CD8-positive, alpha-beta T cell (primary cell): ENCODE measurements at regions of chr5 and their contacts with region 1.

Region 1: DNA sequence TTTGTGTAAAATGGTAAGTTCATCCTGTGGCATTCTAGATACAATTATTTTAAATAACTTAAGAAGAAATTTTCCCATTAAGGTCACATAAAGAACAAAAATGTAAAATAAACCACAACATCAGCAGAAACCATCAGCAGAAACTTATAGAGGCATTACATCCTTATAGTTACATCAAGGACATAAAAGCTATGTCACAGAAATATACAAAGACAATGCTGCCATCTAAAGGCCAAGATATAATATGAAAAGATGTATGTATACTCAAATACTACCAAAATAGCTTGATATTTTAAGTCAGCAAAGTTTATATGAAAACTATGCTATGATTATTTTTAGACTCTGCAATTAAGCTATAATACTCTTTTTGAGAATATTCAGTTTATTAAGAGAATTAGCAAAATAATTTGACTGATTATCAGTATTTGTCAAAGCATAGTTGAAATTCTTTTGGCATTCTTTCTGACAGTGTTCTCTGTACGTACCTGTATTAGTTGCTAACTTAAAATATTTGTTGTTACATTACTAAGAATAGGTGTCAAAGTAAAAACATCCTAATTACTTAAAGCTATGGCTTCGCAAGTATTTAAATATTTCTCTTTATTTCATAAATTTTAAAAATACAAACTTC is 36.2 kb downstream of the FBXL17 start:
- DNase-seq: peak in 2 of 9 experiments; percentile 47 to 66
- ATAC-seq: peak; percentile 65
- H3K4me3 ChIP-seq: no peak overlapping the region
- H3K4me3 Mint-ChIP-seq: no peak overlapping the region
- H3K27ac ChIP-seq: no peak overlapping the region
- H3K27ac Mint-ChIP-seq: no peak overlapping the region
- H3K4me1 ChIP-seq: no peaks in the 10 kb centered on the region
- H3K4me1 Mint-ChIP-seq: no peaks in the 10 kb centered on the region
- H3K27me3 ChIP-seq: no peaks in the 10 kb centered on the region
- H3K27me3 Mint-ChIP-seq: no peaks in the 10 kb centered on the region
- CTCF ChIP-seq: peak; percentile 72

Region 2: GRCh38 chr5:106875591-106876297 is 1469.9 kb before region 1 on chr5:
- CTCF ChIA-PET with region 1: no interaction called
- POLR2A ChIA-PET with region 1: no interaction called
- intact Hi-C with region 1: no loop called
- DNase-seq: peak in 2 of 9 experiments; percentile 8 to 18
- ATAC-seq: no peak
- H3K4me3 ChIP-seq: no peak overlapping the region
- H3K4me3 Mint-ChIP-seq: no peak overlapping the region
- H3K27ac ChIP-seq: no peak overlapping the region
- H3K27ac Mint-ChIP-seq: no peak overlapping the region
- H3K4me1 ChIP-seq: no peaks in the 10 kb centered on the region
- H3K4me1 Mint-ChIP-seq: no peaks in the 10 kb centered on the region
- H3K27me3 ChIP-seq: no peaks in the 10 kb centered on the region
- H3K27me3 Mint-ChIP-seq: no peaks in the 10 kb centered on the region
- CTCF ChIP-seq: no peak

Region 3: DNA sequence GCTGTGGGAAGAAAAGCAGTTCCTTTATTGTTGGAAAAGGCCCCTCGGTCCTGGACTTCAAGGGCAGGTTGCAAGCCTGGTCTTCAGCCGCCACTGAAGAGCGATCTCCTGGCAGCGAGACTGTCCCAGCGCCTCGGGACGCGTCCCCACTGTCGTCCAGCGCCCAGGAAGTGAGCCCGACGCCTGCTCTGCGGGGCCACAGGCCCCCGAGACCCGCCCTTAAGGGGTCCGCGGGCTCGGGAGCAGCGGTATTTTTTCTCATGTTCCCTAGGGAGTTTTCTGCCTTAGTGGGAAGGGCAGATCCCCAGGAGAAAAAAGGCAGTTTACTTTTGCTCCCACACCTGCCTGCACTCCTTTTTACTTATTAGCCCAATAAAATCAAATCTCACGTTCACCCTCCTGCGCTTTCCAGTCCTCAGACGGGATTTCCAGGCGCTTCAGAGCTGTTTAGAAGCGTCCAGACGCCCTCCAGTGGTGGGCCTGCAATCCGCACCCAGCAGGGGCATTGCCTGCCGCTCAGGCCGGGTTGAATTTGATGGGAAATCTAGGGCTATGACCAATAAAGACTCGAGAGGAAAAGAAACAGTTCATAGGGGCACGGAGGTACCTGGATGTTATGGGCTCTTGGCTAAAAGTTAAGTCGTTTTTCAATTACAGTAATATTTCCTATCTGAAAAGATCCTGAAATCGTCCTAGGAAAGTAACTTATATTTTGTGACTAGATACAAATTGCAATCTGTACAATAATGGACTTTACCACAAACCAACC is 672.1 kb before region 1 on chr5:
- CTCF ChIA-PET with region 1: no interaction called
- POLR2A ChIA-PET with region 1: no interaction called
- intact Hi-C with region 1: loop called in 1 of 2 experiments (anchors 10 kb)
- DNase-seq: peak; percentile 40 to 80 (median 66)
- ATAC-seq: peak; percentile 76
- H3K4me3 ChIP-seq: peak overlapping the region; percentile 43 to 44
- H3K4me3 Mint-ChIP-seq: peak overlapping the region; percentile 87
- H3K27ac ChIP-seq: no peak overlapping the region
- H3K27ac Mint-ChIP-seq: no peak overlapping the region
- H3K4me1 ChIP-seq: peaks cover 28% of the 10 kb centered on the region
- H3K4me1 Mint-ChIP-seq: peaks cover 32% of the 10 kb centered on the region
- H3K27me3 ChIP-seq: peaks cover 21 to 22% of the 10 kb centered on the region in 2 experiments
- H3K27me3 Mint-ChIP-seq: peaks cover 63% of the 10 kb centered on the region
- CTCF ChIP-seq: peak; percentile 81

Region 4: GRCh38 chr5:108148715-108149139 is 196.9 kb before region 1 on chr5:
- CTCF ChIA-PET with region 1: no interaction called
- POLR2A ChIA-PET with region 1: no interaction called
- intact Hi-C with region 1: loop called in 1 of 2 experiments (anchors 5 kb)
- DNase-seq: no peak
- ATAC-seq: no peak
- H3K4me3 ChIP-seq: no peak overlapping the region
- H3K4me3 Mint-ChIP-seq: no peak overlapping the region
- H3K27ac ChIP-seq: no peak overlapping the region
- H3K27ac Mint-ChIP-seq: no peak overlapping the region
- H3K4me1 ChIP-seq: no peaks in the 10 kb centered on the region
- H3K4me1 Mint-ChIP-seq: peaks cover 3% of the 10 kb centered on the region
- H3K27me3 ChIP-seq: no peaks in the 10 kb centered on the region
- H3K27me3 Mint-ChIP-seq: no peaks in the 10 kb centered on the region
- CTCF ChIP-seq: no peak

Region 5: DNA sequence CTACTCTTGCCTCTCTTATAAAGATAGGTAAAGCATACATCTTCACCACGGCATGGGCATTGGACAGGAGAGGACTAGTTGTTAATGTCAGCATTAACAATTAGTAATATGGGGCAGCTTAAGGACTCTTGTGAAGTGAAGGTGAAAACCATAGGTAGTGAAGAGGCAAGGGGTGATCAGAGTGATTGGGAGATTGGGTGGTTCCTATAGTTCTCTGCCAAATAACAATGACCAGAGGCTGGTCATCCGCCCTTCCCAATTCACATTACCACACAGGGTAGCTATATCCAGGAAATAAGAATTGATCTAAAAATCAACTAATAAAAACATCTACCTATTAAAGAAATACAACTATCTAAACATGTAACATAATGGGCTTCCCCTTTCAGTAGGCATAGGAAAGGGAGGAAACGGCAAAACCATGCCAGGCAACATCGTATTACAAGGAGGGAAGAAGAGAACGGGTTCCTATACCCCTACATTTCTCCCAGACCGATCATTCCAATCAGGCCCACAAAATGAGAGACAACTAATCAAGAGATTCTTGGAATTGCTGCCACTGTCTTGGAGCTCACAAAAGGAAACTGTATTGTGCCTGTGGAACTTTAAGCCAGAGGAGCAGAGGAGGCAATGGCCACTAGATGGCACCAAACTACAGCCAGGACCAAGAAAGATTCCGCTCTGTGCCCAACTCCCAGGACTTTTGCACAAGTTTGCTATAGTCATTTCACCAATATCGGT is 85.4 kb before region 1 on chr5:
- CTCF ChIA-PET with region 1: interaction called, 30 read pairs
- POLR2A ChIA-PET with region 1: no interaction called
- intact Hi-C with region 1: loop called (anchors 1 kb)
- DNase-seq: peak; percentile 26 to 79 (median 62)
- ATAC-seq: peak; percentile 62
- H3K4me3 ChIP-seq: no peak overlapping the region
- H3K4me3 Mint-ChIP-seq: no peak overlapping the region
- H3K27ac ChIP-seq: no peak overlapping the region
- H3K27ac Mint-ChIP-seq: no peak overlapping the region
- H3K4me1 ChIP-seq: no peaks in the 10 kb centered on the region
- H3K4me1 Mint-ChIP-seq: peaks cover 4% of the 10 kb centered on the region
- H3K27me3 ChIP-seq: no peaks in the 10 kb centered on the region
- H3K27me3 Mint-ChIP-seq: no peaks in the 10 kb centered on the region
- CTCF ChIP-seq: peak; percentile 90

Region 6: GRCh38 chr5:108271127-108271526 is 74.5 kb before region 1 on chr5:
- CTCF ChIA-PET with region 1: no interaction called
- POLR2A ChIA-PET with region 1: no interaction called
- intact Hi-C with region 1: no loop called
- DNase-seq: no peak
- ATAC-seq: no peak
- H3K4me3 ChIP-seq: no peak overlapping the region
- H3K4me3 Mint-ChIP-seq: no peak overlapping the region
- H3K27ac ChIP-seq: no peak overlapping the region
- H3K27ac Mint-ChIP-seq: no peak overlapping the region
- H3K4me1 ChIP-seq: no peaks in the 10 kb centered on the region
- H3K4me1 Mint-ChIP-seq: no peaks in the 10 kb centered on the region
- H3K27me3 ChIP-seq: no peaks in the 10 kb centered on the region
- H3K27me3 Mint-ChIP-seq: no peaks in the 10 kb centered on the region
- CTCF ChIP-seq: no peak

Region 7: DNA sequence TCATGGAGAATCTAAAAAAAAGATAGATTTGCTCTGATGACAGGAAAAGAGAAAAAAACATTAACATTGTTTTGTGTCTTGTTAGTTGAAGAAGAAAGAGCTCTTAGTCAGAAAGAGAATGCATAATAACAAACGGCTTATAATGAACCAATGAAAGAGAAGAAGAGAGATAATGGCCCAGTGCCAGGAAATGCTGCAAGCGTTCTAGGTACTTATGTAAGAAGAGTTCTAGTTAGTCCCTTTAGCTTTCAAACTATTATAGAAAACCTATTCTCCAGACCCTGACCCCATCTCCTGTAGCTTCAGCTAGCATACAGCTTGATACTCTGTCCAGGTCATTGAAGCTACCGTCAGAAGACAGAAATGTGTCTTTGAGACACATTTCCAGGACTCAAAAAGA is 34.0 kb before region 1 on chr5:
- CTCF ChIA-PET with region 1: no interaction called
- POLR2A ChIA-PET with region 1: no interaction called
- intact Hi-C with region 1: loop called in 1 of 2 experiments (anchors 5 kb)
- DNase-seq: no peak
- ATAC-seq: no peak
- H3K4me3 ChIP-seq: no peak overlapping the region
- H3K4me3 Mint-ChIP-seq: no peak overlapping the region
- H3K27ac ChIP-seq: no peak overlapping the region
- H3K27ac Mint-ChIP-seq: no peak overlapping the region
- H3K4me1 ChIP-seq: no peaks in the 10 kb centered on the region
- H3K4me1 Mint-ChIP-seq: peaks cover 2% of the 10 kb centered on the region
- H3K27me3 ChIP-seq: no peaks in the 10 kb centered on the region
- H3K27me3 Mint-ChIP-seq: no peaks in the 10 kb centered on the region
- CTCF ChIP-seq: no peak

Region 8: GRCh38 chr5:110134963-110135935 is 1789.6 kb after region 1 on chr5:
- CTCF ChIA-PET with region 1: no interaction called
- POLR2A ChIA-PET with region 1: no interaction called
- intact Hi-C with region 1: no loop called
- DNase-seq: no peak
- ATAC-seq: no peak
- H3K4me3 ChIP-seq: no peak overlapping the region
- H3K4me3 Mint-ChIP-seq: no peak overlapping the region
- H3K27ac ChIP-seq: no peak overlapping the region
- H3K27ac Mint-ChIP-seq: no peak overlapping the region
- H3K4me1 ChIP-seq: no peaks in the 10 kb centered on the region
- H3K4me1 Mint-ChIP-seq: no peaks in the 10 kb centered on the region
- H3K27me3 ChIP-seq: no peaks in the 10 kb centered on the region
- H3K27me3 Mint-ChIP-seq: no peaks in the 10 kb centered on the region
- CTCF ChIP-seq: no peak